Ascending aorta (tissue), 2 donors: ENCODE measurements at regions of chr3 and their contacts with region 1.

Region 1: GRCh38 chr3:127590593-127591477 is at the start of gene TPRA1:
- DNase-seq: peak; percentile 82 to 96
- H3K4me3 ChIP-seq: peak within 1 kb of the TSS; percentile 83 to 89
- H3K27ac ChIP-seq: peak within 1 kb of the TSS; percentile 89 to 90
- H3K4me1 ChIP-seq: peaks cover 3 to 18% of the 10 kb centered on the region in 2 donors
- H3K27me3 ChIP-seq: no peaks in the 10 kb centered on the region
- CTCF ChIP-seq: peak in 1 of 3 experiments; percentile 30
- total RNA-seq, gene TPRA1: 87.1 TPM

Region 2: GRCh38 chr3:126995926-126996512 is 594.8 kb before region 1 on chr3:
- intact Hi-C with region 1: loop called (anchors 5 kb)
- DNase-seq: no peak
- H3K4me3 ChIP-seq: no peak overlapping the region
- H3K27ac ChIP-seq: peak overlapping the region; percentile 86 to 91
- H3K4me1 ChIP-seq: peaks cover 51 to 89% of the 10 kb centered on the region in 2 donors
- H3K27me3 ChIP-seq: no peaks in the 10 kb centered on the region
- CTCF ChIP-seq: no peak

Region 3: DNA sequence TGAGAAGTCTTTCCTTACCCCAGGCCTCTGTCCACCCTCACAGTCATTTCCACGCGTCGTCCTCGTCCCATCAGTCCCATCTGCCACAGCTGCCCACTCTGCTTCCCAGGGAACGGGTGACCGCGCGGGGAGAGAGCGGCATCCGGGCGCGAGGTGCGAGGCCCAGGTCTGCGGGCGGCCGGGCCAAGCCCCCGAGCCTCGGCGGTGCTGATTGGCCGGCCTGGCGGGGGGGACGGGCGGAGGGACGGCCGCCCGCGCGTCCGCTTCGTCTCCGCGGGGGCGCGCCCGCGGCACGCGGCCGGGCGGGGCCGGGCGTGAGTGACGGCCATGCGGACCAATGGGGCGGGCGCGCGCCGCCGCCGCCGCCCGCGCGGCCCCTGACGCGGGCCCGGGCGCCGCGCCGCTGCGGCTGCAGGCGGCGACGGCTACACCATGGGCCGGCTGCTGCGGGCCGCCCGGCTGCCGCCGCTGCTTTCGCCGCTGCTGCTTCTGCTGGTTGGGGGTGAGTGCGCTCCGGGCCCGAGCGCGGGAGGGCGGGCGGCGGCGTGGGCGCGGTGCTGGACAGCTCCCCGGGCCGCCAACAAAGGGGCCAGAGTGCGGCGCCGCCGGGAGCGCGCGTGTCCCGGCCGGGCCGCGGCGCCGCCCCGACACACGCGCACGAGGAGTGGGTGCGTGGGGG is 38.1 kb after region 1 on chr3 and contains the start of gene PODXL2:
- intact Hi-C with region 1: loop called (anchors 2 kb)
- DNase-seq: no peak
- H3K4me3 ChIP-seq: peak within 1 kb of the TSS; percentile 64 to 67
- H3K27ac ChIP-seq: no peak within 1 kb of the TSS
- H3K4me1 ChIP-seq: peaks cover 8 to 10% of the 10 kb centered on the region in 2 donors
- H3K27me3 ChIP-seq: no peaks in the 10 kb centered on the region
- CTCF ChIP-seq: no peak
- total RNA-seq, gene PODXL2: 1.6 TPM

Region 4: DNA sequence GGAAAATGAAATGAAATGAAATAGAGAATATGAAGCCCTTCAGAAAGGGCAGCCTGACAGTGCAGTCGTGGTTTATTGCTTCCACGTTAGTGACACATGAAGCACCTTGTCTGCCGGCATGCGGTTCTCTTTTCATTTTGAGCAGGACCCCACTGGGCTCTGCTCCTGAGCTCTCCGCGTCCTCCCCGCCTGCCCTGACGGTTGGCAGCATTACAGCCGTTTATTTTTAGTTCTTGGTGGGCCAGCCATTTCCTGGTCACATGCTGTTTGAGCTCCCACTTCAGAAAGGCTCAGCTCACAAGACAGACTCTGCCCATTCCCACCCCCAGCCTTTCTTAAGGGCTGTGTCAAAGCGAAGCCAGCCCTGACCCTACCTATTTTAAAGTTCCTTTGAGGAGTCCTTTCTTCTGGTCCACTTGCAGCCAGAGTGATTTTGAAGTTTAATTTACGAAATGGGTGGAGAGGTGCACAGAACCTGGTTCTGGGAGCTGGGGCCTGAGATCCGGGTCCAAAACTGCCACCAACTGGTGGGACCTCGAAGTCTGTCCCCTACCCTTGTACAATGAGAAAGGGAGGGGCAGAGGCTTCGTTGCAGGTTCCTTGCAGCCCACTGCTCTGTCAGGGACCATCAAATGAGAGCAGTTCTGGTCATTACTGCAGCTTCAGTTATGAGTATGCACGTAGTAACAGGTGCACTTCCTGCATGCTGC is 171.4 kb after region 1 on chr3:
- intact Hi-C with region 1: no loop called
- DNase-seq: peak in 1 of 2 donors; percentile 79
- H3K4me3 ChIP-seq: peak overlapping the region; percentile 18 to 56
- H3K27ac ChIP-seq: peak overlapping the region; percentile 76 to 82
- H3K4me1 ChIP-seq: peaks cover 9 to 21% of the 10 kb centered on the region in 2 donors
- H3K27me3 ChIP-seq: no peaks in the 10 kb centered on the region
- CTCF ChIP-seq: no peak

Region 5: DNA sequence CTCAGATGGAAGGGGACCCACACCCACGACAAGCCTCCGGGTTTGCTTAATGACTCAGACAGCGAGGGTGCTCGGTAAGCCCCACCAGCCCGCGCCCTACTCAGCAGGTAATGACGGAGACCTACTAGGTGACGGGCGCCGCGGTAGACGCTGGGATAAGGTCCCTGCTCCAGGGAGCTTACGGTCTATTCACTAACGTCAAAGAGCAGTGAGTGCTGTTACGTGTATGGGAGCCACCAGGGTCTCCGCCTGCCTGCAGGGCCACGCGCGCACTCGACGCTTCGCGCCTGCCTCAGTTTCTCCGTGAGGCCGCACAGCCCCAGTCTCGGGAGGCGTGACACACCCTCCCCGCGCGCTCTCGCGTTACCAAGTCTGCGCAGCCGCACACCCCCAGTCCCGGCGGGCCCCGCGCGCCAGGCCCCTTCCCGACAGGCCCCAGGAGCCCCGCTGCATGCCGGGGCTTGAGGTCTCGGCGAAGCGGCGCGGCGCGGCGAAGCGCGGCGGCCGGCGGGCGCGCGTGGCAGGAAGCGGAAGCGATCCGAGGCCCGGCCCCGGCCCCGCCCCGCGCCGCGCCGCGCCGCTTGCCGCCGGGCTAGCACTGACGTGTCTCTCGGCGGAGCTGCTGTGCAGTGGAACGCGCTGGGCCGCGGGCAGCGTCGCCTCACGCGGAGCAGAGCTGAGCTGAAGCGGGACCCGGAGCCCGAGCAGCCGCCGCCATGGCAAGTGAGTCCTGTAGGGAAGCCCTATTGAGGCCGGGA is 461.2 kb after region 1 on chr3 and contains the start of gene SEC61A1:
- intact Hi-C with region 1: loop called (anchors 2 kb)
- DNase-seq: peak; percentile 81 to 96
- H3K4me3 ChIP-seq: peak within 1 kb of the TSS; percentile 94 to 98
- H3K27ac ChIP-seq: peak within 1 kb of the TSS; percentile 96
- H3K4me1 ChIP-seq: peaks cover 15 to 29% of the 10 kb centered on the region in 2 donors
- H3K27me3 ChIP-seq: no peaks in the 10 kb centered on the region
- CTCF ChIP-seq: peak in 1 of 3 experiments; percentile 4
- total RNA-seq, gene SEC61A1: 193 TPM

Region 6: GRCh38 chr3:128879125-128879969 is 1288.5 kb after region 1 on chr3 and contains the start of gene ACAD9:
- intact Hi-C with region 1: loop called (anchors 10 kb)
- DNase-seq: peak; percentile 94 to 98
- H3K4me3 ChIP-seq: peak within 1 kb of the TSS; percentile 71 to 86
- H3K27ac ChIP-seq: peak within 1 kb of the TSS; percentile 91 to 95
- H3K4me1 ChIP-seq: peaks cover 17% of the 10 kb centered on the region in 2 donors
- H3K27me3 ChIP-seq: no peaks in the 10 kb centered on the region
- CTCF ChIP-seq: no peak
- total RNA-seq, gene ACAD9: 23.4 TPM